ENCODE measurements at regions of chr15 and their contacts with region 1.

Region 1: DNA sequence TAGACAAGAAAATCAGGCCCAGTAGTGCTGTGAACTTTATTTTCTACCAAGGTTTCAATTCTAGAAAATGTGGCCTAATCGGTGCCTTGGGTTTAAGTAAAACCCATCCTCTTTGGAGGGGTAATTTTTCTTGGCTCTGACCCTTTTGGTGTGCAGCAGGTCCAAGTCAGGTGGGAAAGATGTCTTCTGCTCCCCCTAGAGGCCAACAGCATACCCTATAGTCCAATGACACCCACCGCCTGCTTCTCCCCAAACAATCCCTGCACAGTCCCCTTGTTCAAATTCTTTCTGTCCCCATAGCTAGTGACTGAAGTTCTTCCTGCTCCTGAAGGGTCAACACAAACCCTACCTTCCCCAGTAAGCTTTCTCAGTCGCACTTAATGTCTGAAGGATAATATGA is 261.8 kb upstream of the GOLGA6L4 start:
- DNase-seq: peak; percentile 22
- H3K4me3 ChIP-seq: no peak overlapping the region
- H3K27ac ChIP-seq: no peak overlapping the region
- H3K4me1 ChIP-seq: no peaks in the 10 kb centered on the region
- CTCF ChIP-seq: peak; percentile 76

Region 2: GRCh38 chr15:83992324-83993031 is 18.7 kb after region 1 on chr15:
- CTCF ChIA-PET with region 1: interaction called, 3 read pairs
- POLR2A ChIA-PET with region 1: interaction called, 14 read pairs
- intact Hi-C with region 1: no loop called
- DNase-seq: no peak
- H3K4me3 ChIP-seq: no peak overlapping the region
- H3K27ac ChIP-seq: no peak overlapping the region
- H3K4me1 ChIP-seq: no peaks in the 10 kb centered on the region
- CTCF ChIP-seq: no peak